Motor neuron (in vitro differentiated cells): ENCODE measurements at regions of chr10 and their contacts with region 1.

Region 1: GRCh38 chr10:93080350-93081046 is 6.8 kb downstream of the CYP26A1 start:
- ATAC-seq: peak; percentile 52 to 89 (median 68)
- H3K4me3 ChIP-seq: no peak overlapping the region
- H3K27ac ChIP-seq: no peak overlapping the region
- H3K4me1 ChIP-seq: peaks cover 0 to 2% of the 10 kb centered on the region in 2 donors

Region 2: GRCh38 chr10:92993699-92994272 is 86.7 kb before region 1 on chr10:
- in situ Hi-C with region 1: no loop called
- ATAC-seq: no peak
- H3K4me3 ChIP-seq: no peak overlapping the region
- H3K27ac ChIP-seq: no peak overlapping the region
- H3K4me1 ChIP-seq: peaks cover 7% of the 10 kb centered on the region in 2 donors

Region 3: DNA sequence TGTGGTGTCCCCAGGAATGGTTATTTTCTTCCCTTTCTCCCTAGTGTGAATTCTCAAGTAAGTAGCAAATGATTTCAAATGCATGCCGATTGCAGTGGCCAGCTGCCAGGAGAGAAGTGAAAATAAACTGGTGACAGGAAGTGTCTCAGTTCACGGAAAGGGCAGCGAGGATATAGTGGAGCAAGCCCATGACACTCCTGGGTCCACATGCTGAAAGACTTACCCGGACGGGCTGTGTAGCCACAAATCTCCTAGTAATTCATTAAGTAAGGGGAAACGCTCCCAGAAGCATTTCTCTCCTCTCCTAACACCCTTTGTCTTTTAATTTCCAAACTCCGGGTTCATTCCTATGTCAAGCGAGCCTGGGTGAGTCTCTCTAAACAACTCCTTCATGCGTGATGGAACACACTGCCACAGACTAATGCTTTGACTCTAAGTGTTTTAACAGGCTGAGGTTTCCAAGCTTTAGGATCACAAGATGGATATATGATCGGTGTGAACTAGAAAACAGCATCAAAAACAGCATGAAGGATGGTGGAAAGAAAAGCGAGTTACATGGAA is 118.8 kb after region 1 on chr10:
- in situ Hi-C with region 1: no loop called
- ATAC-seq: peak; percentile 89 to 96 (median 94)
- H3K4me3 ChIP-seq: peak overlapping the region in 4 of 5 donors; percentile 5 to 13 (median 10)
- H3K27ac ChIP-seq: peak overlapping the region; percentile 1 to 24
- H3K4me1 ChIP-seq: peaks cover 7 to 8% of the 10 kb centered on the region in 2 donors

Region 4: DNA sequence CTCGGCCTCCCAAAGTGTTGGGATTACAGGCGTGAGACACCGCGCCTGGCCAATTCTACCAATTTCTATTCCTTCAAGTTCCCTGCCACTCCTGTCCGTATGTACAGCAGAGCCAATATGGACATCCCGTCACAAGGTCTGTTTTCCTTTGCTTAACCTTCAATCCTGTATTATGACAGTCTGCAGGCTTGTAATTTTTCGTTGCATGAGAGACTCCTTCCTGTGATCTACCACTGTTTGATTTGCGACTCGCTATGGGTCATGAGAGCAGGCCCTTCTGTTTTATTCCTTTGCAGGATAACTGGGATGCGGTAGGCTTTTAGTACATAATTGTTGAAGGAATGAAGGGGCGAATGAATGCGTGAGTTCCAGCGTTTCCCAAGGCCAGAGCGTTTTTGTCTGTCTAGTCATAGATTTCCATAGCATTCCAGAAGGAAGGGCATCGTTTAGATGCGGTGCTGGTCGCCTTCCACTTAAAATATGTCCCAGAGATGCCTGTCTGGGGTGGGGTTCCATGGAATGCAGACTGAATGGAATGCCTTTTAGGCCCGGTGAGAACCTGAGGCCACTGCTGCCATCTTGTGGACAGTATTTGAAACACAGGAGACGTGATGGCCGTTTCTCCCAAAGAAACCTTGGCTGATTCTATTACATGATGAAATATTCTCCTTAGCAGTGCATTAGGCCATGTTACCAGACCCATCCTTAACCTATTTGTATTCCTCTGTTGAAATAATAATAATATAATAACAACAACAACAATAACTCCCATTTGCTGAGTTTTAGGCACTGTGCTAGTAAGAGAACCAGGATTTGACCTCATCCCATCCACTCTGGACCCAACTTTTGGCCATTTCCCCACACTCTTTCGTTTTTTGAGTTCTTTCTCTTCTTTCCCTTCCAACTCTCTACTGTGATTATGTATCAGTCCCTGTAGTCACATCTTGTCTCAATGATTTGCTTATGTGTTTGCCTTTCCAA is 208.4 kb after region 1 on chr10:
- in situ Hi-C with region 1: loop called in 3 of 9 experiments (anchors 10 to 25 kb)
- ATAC-seq: peak; percentile 49 to 97 (median 70)
- H3K4me3 ChIP-seq: no peak overlapping the region
- H3K27ac ChIP-seq: no peak overlapping the region
- H3K4me1 ChIP-seq: no peaks in the 10 kb centered on the region

Region 5: GRCh38 chr10:93293999-93294398 is 213.5 kb after region 1 on chr10:
- in situ Hi-C with region 1: loop called in 3 of 9 experiments (anchors 10 to 25 kb)
- ATAC-seq: peak in 2 of 8 experiments; percentile 11 to 25
- H3K4me3 ChIP-seq: no peak overlapping the region
- H3K27ac ChIP-seq: no peak overlapping the region
- H3K4me1 ChIP-seq: peaks cover 0 to under 1% of the 10 kb centered on the region in 2 donors

Region 6: DNA sequence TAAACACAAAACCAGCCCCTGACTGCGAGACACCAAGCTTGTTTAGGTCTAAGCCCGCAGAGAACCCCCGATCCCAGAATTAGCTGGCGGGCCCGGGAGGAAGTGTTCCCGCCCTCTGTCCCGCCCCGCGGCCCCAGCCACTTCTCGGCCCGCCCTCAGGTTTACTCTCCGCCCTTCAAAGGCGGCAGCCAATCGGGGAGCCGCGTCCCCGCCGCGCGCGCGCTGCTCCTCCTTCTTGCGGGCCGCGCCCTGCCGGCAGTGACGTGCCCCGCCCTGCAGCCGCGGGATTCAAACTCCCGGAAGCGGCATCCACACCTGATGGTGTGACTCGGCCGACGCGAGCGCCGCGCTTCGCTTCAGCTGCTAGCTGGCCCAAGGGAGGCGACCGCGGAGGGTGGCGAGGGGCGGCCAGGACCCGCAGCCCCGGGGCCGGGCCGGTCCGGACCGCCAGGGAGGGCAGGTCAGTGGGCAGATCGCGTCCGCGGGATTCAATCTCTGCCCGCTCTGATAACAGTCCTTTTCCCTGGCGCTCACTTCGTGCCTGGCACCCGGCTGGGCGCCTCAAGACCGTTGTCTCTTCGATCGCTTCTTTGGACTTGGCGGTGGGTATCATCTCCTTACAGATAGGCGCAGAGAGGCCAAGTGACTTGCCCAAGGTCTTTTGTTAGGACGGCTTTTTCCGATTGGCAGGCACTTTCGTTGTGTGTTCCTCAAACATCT is 416.0 kb after region 1 on chr10 and contains the start of gene CEP55:
- in situ Hi-C with region 1: loop called in 1 of 9 experiments (anchors 25 kb)
- ATAC-seq: peak; percentile 98 to 100 (median 99)
- H3K4me3 ChIP-seq: peak within 1 kb of the TSS; percentile 43 to 72 (median 62)
- H3K27ac ChIP-seq: no peak within 1 kb of the TSS
- H3K4me1 ChIP-seq: peaks cover 0 to 2% of the 10 kb centered on the region in 2 donors
- total RNA-seq, gene CEP55: 0.36 to 21.1 (median 1.4) TPM

Region 7: DNA sequence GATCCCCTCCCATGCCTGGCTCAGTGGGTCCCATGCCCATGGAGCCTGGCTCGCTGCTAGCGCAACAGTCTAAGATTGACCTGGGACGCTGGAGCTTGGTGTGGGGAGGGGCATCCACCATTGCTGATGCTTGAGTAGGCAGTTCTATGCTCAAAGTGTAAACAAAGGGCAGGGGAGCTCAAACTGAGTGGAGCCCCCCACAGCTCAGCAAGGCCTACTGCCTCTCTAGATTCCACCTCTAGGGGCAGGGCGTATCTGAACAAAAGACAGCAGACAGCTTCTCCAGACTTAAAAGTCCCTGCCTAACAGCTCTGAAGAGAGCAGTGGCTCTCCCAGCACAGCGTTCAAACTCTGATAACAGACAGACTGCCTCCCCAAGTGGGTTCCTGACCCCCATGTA is 454.8 kb after region 1 on chr10:
- in situ Hi-C with region 1: no loop called
- ATAC-seq: no peak
- H3K4me3 ChIP-seq: no peak overlapping the region
- H3K27ac ChIP-seq: no peak overlapping the region
- H3K4me1 ChIP-seq: no peaks in the 10 kb centered on the region